Left ventricle myocardium superior (tissue), 1 donor: ENCODE measurements at regions of chr10 and their contacts with region 1.

Region 1: GRCh38 chr10:3811291-3811870 is 26.4 kb upstream of the KLF6 start:
- DNase-seq: no peak
- ATAC-seq: peak; percentile 67

Region 2: DNA sequence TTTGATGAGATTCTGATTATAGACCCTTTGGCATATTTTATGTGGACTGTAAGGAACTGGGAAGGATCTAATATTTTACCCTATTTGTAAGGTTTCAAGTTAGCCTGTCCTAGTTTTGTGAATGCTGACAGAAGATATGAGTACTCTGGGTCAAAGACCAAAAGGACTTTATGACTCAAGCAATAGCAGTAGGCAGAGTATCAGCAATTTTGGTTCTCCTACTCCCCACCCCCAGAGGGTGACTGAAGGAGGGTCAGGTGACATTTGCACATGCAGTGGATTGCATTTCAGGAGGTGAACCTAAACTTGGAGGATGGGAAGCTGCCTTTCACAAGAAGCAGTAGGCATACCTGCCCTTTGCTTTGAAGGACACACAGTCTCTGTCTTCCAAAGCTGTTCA is 57.7 kb after region 1 on chr10:
- intact Hi-C with region 1: no loop called
- DNase-seq: no peak
- ATAC-seq: no peak

Region 3: GRCh38 chr10:3887885-3888476 is 76.6 kb after region 1 on chr10:
- intact Hi-C with region 1: no loop called
- DNase-seq: no peak
- ATAC-seq: peak; percentile 13

Region 4: GRCh38 chr10:3911713-3912442 is 100.5 kb after region 1 on chr10:
- intact Hi-C with region 1: loop called (anchors 10 kb)
- DNase-seq: no peak
- ATAC-seq: peak; percentile 87